ENCODE measurements at regions of chr6 and their contacts with region 1.

Region 1: DNA sequence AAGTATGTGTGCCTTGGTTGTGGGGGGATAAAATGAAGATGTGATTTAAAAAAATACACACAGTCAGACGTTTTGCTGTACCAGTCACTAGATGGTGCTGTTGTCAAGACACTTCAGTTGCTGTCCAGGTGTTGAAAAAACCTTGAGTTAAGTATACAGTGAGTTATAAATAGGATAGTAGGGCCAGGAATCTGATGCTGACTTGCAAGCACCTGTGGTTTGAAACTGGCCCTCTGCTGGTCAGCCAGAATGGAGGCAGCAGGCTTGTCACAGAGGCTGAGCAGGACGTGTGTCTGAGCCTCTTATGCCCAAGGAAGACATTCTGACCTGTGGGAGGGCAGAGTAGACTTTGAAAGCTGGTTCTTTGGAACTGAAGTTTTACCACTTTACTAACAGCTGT is 27.8 kb downstream of the RNF8 start:
- DNase-seq: peak; percentile 47
- H3K4me3 ChIP-seq: no peak overlapping the region; a peak in 1 of 4 replicates
- H3K27ac ChIP-seq: no peak overlapping the region
- H3K4me1 ChIP-seq: no peaks in the 10 kb centered on the region
- H3K27me3 ChIP-seq: no peaks in the 10 kb centered on the region
- CTCF ChIP-seq: peak; percentile 65
- EP300 ChIP-seq: no peak
- RAD21 ChIP-seq: peak; percentile 79

Region 2: GRCh38 chr6:37289931-37290330 is 91.6 kb before region 1 on chr6:
- CTCF ChIA-PET with region 1: no interaction called
- POLR2A ChIA-PET with region 1: no interaction called
- DNase-seq: no peak
- H3K4me3 ChIP-seq: no peak overlapping the region
- H3K27ac ChIP-seq: no peak overlapping the region
- H3K4me1 ChIP-seq: peaks cover 0 to 3% of the 10 kb centered on the region in 2 experiments; a peak in 1 of 4 replicates
- H3K27me3 ChIP-seq: no peaks in the 10 kb centered on the region
- CTCF ChIP-seq: no peak
- EP300 ChIP-seq: no peak
- RAD21 ChIP-seq: no peak

Region 3: GRCh38 chr6:37365762-37366161 is 15.8 kb before region 1 on chr6:
- CTCF ChIA-PET with region 1: interaction called, 22 read pairs
- POLR2A ChIA-PET with region 1: no interaction called
- DNase-seq: peak; percentile 37
- H3K4me3 ChIP-seq: no peak overlapping the region
- H3K27ac ChIP-seq: no peak overlapping the region
- H3K4me1 ChIP-seq: peaks cover 0 to 8% of the 10 kb centered on the region in 2 experiments; a peak in 2 of 4 replicates
- H3K27me3 ChIP-seq: no peaks in the 10 kb centered on the region
- CTCF ChIP-seq: peak; percentile 43
- EP300 ChIP-seq: no peak
- RAD21 ChIP-seq: peak; percentile 67

Region 4: GRCh38 chr6:37418722-37419121 is 37.1 kb after region 1 on chr6:
- CTCF ChIA-PET with region 1: no interaction called
- POLR2A ChIA-PET with region 1: no interaction called
- DNase-seq: no peak
- H3K4me3 ChIP-seq: no peak overlapping the region
- H3K27ac ChIP-seq: no peak overlapping the region
- H3K4me1 ChIP-seq: no peaks in the 10 kb centered on the region
- H3K27me3 ChIP-seq: no peaks in the 10 kb centered on the region
- CTCF ChIP-seq: no peak
- EP300 ChIP-seq: no peak
- RAD21 ChIP-seq: no peak

Region 5: GRCh38 chr6:37456126-37456525 is 74.5 kb after region 1 on chr6:
- CTCF ChIA-PET with region 1: interaction called, 11 read pairs
- POLR2A ChIA-PET with region 1: no interaction called
- DNase-seq: no peak
- H3K4me3 ChIP-seq: no peak overlapping the region
- H3K27ac ChIP-seq: peak overlapping the region; percentile 6 to 72; a peak in 3 of 4 replicates
- H3K4me1 ChIP-seq: peaks cover 16 to 83% of the 10 kb centered on the region in 2 experiments; a peak in 3 of 4 replicates
- H3K27me3 ChIP-seq: no peaks in the 10 kb centered on the region
- CTCF ChIP-seq: no peak
- EP300 ChIP-seq: no peak
- RAD21 ChIP-seq: no peak

Region 6: GRCh38 chr6:37473397-37474095 is 92.0 kb after region 1 on chr6:
- CTCF ChIA-PET with region 1: interaction called, 10 read pairs
- POLR2A ChIA-PET with region 1: no interaction called
- DNase-seq: peak; percentile 84
- H3K4me3 ChIP-seq: no peak overlapping the region
- H3K27ac ChIP-seq: peak overlapping the region in 1 of 2 experiments; percentile 88; a peak in 3 of 4 replicates
- H3K4me1 ChIP-seq: peaks cover 7 to 32% of the 10 kb centered on the region in 2 experiments; a peak in 3 of 4 replicates
- H3K27me3 ChIP-seq: no peaks in the 10 kb centered on the region
- CTCF ChIP-seq: no peak
- EP300 ChIP-seq: peak; percentile 23 to 85; a peak in 3 of 4 replicates
- RAD21 ChIP-seq: peak; percentile 35

Region 7: DNA sequence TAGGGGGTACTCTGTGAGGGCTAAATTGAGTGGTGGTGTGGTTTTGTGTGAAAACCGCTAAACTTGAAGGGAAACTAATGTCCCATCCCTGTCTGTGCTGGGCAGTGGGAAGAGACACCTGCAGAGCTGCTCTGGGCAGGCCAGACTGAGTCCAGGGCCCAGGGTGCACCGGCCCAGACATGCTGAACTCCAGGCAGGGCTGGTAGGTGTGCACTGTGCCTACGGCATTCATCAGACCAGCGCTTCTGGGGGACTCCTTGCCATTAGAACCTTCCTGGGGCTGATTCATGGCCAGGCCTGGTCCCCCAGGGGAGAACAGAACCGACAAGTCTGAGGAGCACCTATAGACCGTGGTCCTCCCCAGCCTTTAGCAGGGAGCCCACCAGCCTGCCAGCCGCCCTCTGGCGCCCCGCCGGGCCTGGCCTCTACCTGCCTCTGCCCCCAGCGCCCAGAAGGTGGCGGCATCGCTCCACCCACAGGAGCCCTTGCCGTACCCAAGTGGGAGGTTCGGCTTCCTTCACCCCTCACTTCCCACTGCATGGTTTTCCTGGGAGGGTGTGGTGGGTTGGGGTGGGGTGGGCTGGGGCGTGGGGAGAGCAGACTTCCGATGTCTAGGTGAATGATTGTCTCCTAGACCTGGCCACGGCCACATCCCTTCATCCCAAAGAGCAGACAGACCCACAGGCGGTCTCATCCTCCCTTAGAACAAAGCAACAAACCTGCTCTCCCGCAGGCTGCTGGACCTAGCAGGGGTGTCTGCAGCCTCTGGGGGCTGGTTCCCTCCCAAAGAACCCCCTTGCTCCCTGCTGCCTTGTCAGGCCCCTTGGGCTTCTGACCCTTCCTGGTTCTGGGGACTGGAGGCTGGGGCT is 102.6 kb after region 1 on chr6:
- CTCF ChIA-PET with region 1: interaction called, 15 read pairs
- POLR2A ChIA-PET with region 1: no interaction called
- DNase-seq: peak; percentile 92
- H3K4me3 ChIP-seq: no peak overlapping the region; a peak in 1 of 4 replicates
- H3K27ac ChIP-seq: peak overlapping the region in 1 of 2 experiments; percentile 43; a peak in 2 of 4 replicates
- H3K4me1 ChIP-seq: peaks cover 0 to 29% of the 10 kb centered on the region in 2 experiments; a peak in 1 of 4 replicates
- H3K27me3 ChIP-seq: no peaks in the 10 kb centered on the region
- CTCF ChIP-seq: peak; percentile 71
- EP300 ChIP-seq: no peak
- RAD21 ChIP-seq: peak; percentile 91

Region 8: GRCh38 chr6:37731888-37732287 is 350.3 kb after region 1 on chr6:
- CTCF ChIA-PET with region 1: no interaction called
- POLR2A ChIA-PET with region 1: no interaction called
- DNase-seq: no peak
- H3K4me3 ChIP-seq: no peak overlapping the region
- H3K27ac ChIP-seq: no peak overlapping the region
- H3K4me1 ChIP-seq: no peaks in the 10 kb centered on the region
- H3K27me3 ChIP-seq: no peaks in the 10 kb centered on the region
- CTCF ChIP-seq: no peak
- EP300 ChIP-seq: no peak
- RAD21 ChIP-seq: no peak

Measured in SK-N-SH (cell line).